Naive thymus-derived CD4-positive, alpha-beta T cell (primary cell): ENCODE measurements at regions of chr10 and their contacts with region 1.

Region 1: GRCh38 chr10:32378363-32379317 is 31.7 kb upstream of the EPC1 start:
- DNase-seq: peak; percentile 69 to 95 (median 91)
- ATAC-seq: peak; percentile 97
- H3K4me3 ChIP-seq: peak overlapping the region; percentile 92
- H3K4me3 Mint-ChIP-seq: no peak overlapping the region
- H3K27ac ChIP-seq: peak overlapping the region; percentile 91
- H3K27ac Mint-ChIP-seq: no peak overlapping the region
- H3K4me1 ChIP-seq: peaks cover 4 to 11% of the 10 kb centered on the region in 2 donors
- H3K4me1 Mint-ChIP-seq: peaks cover 12 to 21% (median 20%) of the 10 kb centered on the region in 7 donors
- H3K27me3 ChIP-seq: no peaks in the 10 kb centered on the region
- H3K27me3 Mint-ChIP-seq: no peaks in the 10 kb centered on the region

Region 2: DNA sequence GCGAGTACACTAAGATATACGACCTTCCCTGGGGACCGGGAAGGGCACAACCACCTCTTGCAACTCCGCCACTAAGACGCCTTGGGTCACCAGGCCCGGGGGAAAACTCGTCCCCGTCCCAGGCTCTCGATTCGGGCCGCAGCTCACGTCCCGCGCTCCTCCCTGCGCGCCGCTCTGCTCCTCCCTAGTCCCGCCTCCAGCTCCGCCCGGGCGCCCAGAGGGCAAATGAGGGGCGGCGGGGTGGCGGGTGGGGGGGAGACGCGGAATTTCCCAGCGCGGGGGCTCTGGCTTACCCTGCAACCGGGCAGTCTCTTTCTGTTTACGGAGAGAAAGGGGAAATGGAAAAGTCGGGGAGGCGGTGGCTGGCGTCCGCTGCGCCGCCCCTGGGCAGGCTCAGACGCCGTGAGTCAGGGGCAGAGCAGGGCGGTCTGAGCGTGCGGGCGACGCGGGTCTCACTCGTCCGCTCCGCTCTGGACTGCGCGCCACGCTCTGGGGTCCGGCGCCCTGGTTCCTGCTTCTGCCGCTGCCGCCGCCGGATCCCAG is 1944.8 kb before region 1 on chr10 and contains the start of gene MAP3K8:
- CTCF ChIA-PET with region 1: no interaction called
- POLR2A ChIA-PET with region 1: no interaction called
- intact Hi-C with region 1: loop called in 1 of 2 experiments (anchors 5 kb)
- DNase-seq: peak; percentile 52 to 92 (median 59)
- ATAC-seq: peak; percentile 86
- H3K4me3 ChIP-seq: peak within 1 kb of the TSS; percentile 69
- H3K4me3 Mint-ChIP-seq: peak within 1 kb of the TSS; percentile 82 to 93 (median 89)
- H3K27ac ChIP-seq: peak within 1 kb of the TSS; percentile 68
- H3K27ac Mint-ChIP-seq: peak within 1 kb of the TSS; percentile 23 to 94 (median 70)
- H3K4me1 ChIP-seq: peaks cover 21 to 22% of the 10 kb centered on the region in 2 donors
- H3K4me1 Mint-ChIP-seq: peaks cover 37 to 62% (median 46%) of the 10 kb centered on the region in 7 donors
- H3K27me3 ChIP-seq: no peaks in the 10 kb centered on the region
- H3K27me3 Mint-ChIP-seq: no peaks in the 10 kb centered on the region
- total RNA-seq, gene MAP3K8: 0.70 to 102 (median 31.2) TPM

Region 3: GRCh38 chr10:31644931-31645633 is 733.6 kb before region 1 on chr10:
- CTCF ChIA-PET with region 1: no interaction called
- POLR2A ChIA-PET with region 1: no interaction called
- intact Hi-C with region 1: no loop called
- DNase-seq: no peak
- ATAC-seq: no peak
- H3K4me3 ChIP-seq: no peak overlapping the region
- H3K4me3 Mint-ChIP-seq: no peak overlapping the region
- H3K27ac ChIP-seq: no peak overlapping the region
- H3K27ac Mint-ChIP-seq: peak overlapping the region in 1 of 9 donors; percentile 60
- H3K4me1 ChIP-seq: no peaks in the 10 kb centered on the region
- H3K4me1 Mint-ChIP-seq: no peaks in the 10 kb centered on the region
- H3K27me3 ChIP-seq: no peaks in the 10 kb centered on the region
- H3K27me3 Mint-ChIP-seq: peaks cover 5 to 16% (median 13%) of the 10 kb centered on the region in 5 donors

Region 4: GRCh38 chr10:31864834-31865518 is 513.7 kb before region 1 on chr10:
- CTCF ChIA-PET with region 1: no interaction called
- POLR2A ChIA-PET with region 1: no interaction called
- intact Hi-C with region 1: loop called in 1 of 2 experiments (anchors 10 kb)
- DNase-seq: no peak
- ATAC-seq: no peak
- H3K4me3 ChIP-seq: no peak overlapping the region
- H3K4me3 Mint-ChIP-seq: peak overlapping the region in 1 of 10 donors; percentile 40
- H3K27ac ChIP-seq: no peak overlapping the region
- H3K27ac Mint-ChIP-seq: peak overlapping the region in 3 of 9 donors; percentile 1 to 3 (median 2)
- H3K4me1 ChIP-seq: peaks cover 0 to 3% of the 10 kb centered on the region in 2 donors
- H3K4me1 Mint-ChIP-seq: peaks cover 8 to 41% (median 34%) of the 10 kb centered on the region in 7 donors
- H3K27me3 ChIP-seq: no peaks in the 10 kb centered on the region
- H3K27me3 Mint-ChIP-seq: no peaks in the 10 kb centered on the region

Region 5: DNA sequence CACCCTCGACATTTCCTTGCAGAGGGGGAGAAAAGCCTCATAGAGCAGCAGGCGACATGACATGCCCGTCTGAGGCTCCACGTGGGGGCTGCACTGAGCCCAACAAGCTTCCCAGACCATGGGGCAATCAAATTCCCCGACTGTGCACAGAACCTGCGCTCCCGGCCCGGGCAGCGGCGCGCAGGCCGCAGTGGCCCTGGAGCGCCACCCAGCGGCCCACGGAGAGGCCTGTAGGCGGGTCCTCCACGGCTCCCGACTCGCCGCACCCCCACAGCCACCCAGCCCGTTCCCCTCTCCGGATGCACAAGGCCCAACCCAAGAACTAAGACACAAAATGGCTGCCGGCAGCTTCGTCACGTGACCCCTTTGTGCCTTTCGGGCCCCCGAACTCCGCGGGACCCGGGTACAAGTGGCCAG is 32.5 kb before region 1 on chr10:
- CTCF ChIA-PET with region 1: interaction called, 5 read pairs
- POLR2A ChIA-PET with region 1: interaction called, 22 read pairs
- intact Hi-C with region 1: loop called (anchors 1 kb)
- DNase-seq: peak in 8 of 9 donors; percentile 93 to 98 (median 97)
- ATAC-seq: peak; percentile 92
- H3K4me3 ChIP-seq: peak overlapping the region; percentile 98
- H3K4me3 Mint-ChIP-seq: peak overlapping the region; percentile 86 to 97 (median 93)
- H3K27ac ChIP-seq: peak overlapping the region; percentile 99
- H3K27ac Mint-ChIP-seq: peak overlapping the region; percentile 99 to 100 (median 100)
- H3K4me1 ChIP-seq: peaks cover 42 to 50% of the 10 kb centered on the region in 2 donors
- H3K4me1 Mint-ChIP-seq: peaks cover 35 to 77% (median 73%) of the 10 kb centered on the region in 7 donors
- H3K27me3 ChIP-seq: no peaks in the 10 kb centered on the region
- H3K27me3 Mint-ChIP-seq: no peaks in the 10 kb centered on the region

Region 6: DNA sequence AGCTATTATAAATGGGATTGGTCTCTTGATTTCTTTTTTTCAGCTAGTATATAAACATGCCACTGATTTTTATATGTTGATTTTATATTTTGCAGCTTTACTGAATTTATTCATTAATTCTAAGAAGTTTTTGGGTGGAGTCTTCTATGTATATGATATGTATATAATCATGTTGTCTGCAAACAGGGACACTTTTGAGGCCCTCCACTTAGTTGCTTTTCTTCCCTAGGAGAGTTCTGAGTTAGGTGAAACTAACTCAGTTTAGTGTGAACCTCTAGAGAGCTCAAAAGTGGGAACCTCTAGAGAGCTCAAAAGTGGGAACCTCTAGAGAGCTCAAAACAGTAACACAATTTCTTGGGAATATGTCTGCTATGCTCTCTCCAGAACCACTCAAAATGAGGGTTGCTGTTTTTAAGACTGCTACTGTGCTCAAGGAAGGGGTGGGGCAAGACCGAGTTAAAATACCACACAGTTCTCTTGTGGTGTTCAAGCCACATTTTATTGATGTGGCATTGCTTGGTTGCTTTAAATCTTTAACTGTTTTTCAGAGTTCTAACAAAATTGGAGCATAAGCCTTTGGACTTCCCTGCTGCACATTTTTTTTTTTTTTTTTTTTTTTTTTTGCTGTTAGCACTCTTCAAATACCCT is 80.5 kb after region 1 on chr10:
- CTCF ChIA-PET with region 1: interaction called, 4 read pairs
- POLR2A ChIA-PET with region 1: interaction called, 26 read pairs
- intact Hi-C with region 1: loop called (anchors 1 kb)
- DNase-seq: peak in 7 of 9 donors; percentile 76 to 90 (median 87)
- ATAC-seq: peak; percentile 100
- H3K4me3 ChIP-seq: peak overlapping the region; percentile 34
- H3K4me3 Mint-ChIP-seq: peak overlapping the region; percentile 48 to 79 (median 68)
- H3K27ac ChIP-seq: peak overlapping the region; percentile 43
- H3K27ac Mint-ChIP-seq: peak overlapping the region; percentile 73 to 92 (median 85)
- H3K4me1 ChIP-seq: peaks cover 31 to 35% of the 10 kb centered on the region in 2 donors
- H3K4me1 Mint-ChIP-seq: peaks cover 20 to 69% (median 61%) of the 10 kb centered on the region in 7 donors
- H3K27me3 ChIP-seq: no peaks in the 10 kb centered on the region
- H3K27me3 Mint-ChIP-seq: no peaks in the 10 kb centered on the region

Region 7: GRCh38 chr10:32516567-32517495 is 138.2 kb after region 1 on chr10:
- CTCF ChIA-PET with region 1: no interaction called
- POLR2A ChIA-PET with region 1: no interaction called
- intact Hi-C with region 1: no loop called
- DNase-seq: no peak
- ATAC-seq: no peak
- H3K4me3 ChIP-seq: no peak overlapping the region
- H3K4me3 Mint-ChIP-seq: no peak overlapping the region
- H3K27ac ChIP-seq: no peak overlapping the region
- H3K27ac Mint-ChIP-seq: peak overlapping the region in 1 of 9 donors; percentile 39
- H3K4me1 ChIP-seq: no peaks in the 10 kb centered on the region
- H3K4me1 Mint-ChIP-seq: peaks cover 0 to under 1% (median 0%) of the 10 kb centered on the region in 7 donors
- H3K27me3 ChIP-seq: no peaks in the 10 kb centered on the region
- H3K27me3 Mint-ChIP-seq: no peaks in the 10 kb centered on the region

Region 8: DNA sequence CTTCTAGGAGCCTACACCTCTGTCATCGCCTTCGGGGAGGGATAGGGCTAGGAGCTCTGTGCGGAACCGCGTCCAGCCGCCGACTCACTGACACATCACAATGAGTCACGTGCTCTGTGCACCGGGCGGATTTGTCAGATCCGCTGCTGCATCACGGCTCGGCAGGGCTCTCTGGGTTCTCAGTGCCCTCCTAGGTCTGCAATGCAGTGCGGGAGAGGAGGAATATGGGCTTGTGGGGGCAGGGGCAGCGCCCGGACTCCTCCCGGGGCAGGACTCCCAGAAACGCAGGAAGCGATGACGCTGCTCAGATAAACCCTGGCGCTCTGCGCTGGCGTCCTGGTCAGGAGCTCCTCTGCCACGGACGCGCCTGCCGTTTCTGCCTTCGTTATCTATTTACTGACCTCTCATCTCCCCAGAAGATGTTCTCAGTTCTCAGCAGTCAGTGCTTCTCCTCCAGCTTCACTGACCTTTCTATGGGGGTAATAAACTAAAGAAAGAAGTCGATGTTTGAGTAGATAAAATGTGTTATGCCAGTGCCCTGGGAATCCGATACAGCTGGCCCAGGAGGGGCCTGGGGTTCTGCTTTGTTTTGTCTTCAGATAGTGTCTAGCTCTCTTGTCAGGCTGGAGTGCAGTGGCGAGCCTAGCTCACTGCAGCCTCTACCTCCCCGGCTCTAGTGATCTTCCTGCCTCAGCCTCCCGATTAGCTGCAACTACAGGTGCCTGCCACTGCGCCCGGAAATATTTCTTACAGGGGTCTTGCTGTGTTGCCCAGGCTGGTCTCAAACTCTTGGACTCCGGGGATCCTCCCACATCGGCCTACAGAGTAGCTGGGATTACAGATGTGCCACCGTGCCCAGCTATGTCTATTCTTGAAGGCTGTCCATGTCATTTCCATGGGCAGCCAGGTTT is 602.2 kb after region 1 on chr10:
- CTCF ChIA-PET with region 1: no interaction called
- POLR2A ChIA-PET with region 1: interaction called, 12 read pairs
- intact Hi-C with region 1: no loop called
- DNase-seq: peak; percentile 54 to 84 (median 66)
- ATAC-seq: peak; percentile 95
- H3K4me3 ChIP-seq: peak overlapping the region; percentile 64
- H3K4me3 Mint-ChIP-seq: peak overlapping the region; percentile 90 to 99 (median 95)
- H3K27ac ChIP-seq: peak overlapping the region; percentile 56
- H3K27ac Mint-ChIP-seq: peak overlapping the region; percentile 82 to 99 (median 93)
- H3K4me1 ChIP-seq: peaks cover 11 to 32% of the 10 kb centered on the region in 2 donors
- H3K4me1 Mint-ChIP-seq: peaks cover 15 to 33% (median 24%) of the 10 kb centered on the region in 7 donors
- H3K27me3 ChIP-seq: no peaks in the 10 kb centered on the region
- H3K27me3 Mint-ChIP-seq: peaks cover 0 to 5% (median 0%) of the 10 kb centered on the region in 5 donors

Region 9: DNA sequence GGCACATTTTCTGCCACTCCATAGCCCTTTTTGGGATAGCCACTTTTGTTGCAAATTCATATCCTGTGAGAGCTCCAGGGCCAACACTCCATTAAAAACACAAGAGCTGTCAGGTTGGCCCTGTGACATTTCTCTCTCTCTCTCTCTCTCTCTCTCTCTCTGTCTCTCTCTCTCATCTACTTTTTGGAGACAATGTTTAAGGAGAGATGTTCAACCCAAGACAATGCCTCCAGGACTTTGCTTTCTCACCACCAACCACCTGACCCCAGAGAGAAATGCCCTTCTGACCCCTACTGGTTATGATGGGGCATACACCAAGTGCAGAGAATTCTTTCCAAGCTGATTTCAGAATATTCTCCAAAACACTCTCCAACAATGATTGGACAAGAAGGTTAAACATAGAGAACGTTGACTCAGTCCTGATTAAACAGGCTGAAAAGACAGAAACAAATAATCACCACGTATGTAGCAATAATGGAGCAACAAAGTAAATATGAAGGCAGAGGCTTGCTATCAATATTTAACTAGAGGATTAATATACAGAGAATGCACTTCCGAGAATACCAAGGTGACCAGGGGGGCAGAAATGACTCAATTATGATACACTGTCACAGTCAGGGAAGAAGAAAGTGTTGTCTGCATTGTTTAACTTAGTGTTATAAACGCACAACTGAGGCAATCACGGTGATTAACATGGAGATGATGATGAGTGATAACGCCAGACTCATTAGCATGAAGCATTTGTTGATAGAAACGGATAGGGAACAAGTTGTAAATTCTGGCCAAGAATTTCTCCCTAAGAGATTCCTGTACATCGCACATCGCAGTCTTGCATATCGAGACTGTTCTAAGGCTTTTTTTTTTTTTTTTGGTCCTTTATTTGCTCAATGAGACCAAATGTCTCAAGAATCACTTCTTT is 777.3 kb after region 1 on chr10:
- CTCF ChIA-PET with region 1: interaction called, 3 read pairs
- POLR2A ChIA-PET with region 1: no interaction called
- intact Hi-C with region 1: loop called in 1 of 2 experiments (anchors 5 kb)
- DNase-seq: peak in 7 of 9 donors; percentile 28 to 65 (median 55)
- ATAC-seq: peak; percentile 85
- H3K4me3 ChIP-seq: no peak overlapping the region
- H3K4me3 Mint-ChIP-seq: no peak overlapping the region
- H3K27ac ChIP-seq: no peak overlapping the region
- H3K27ac Mint-ChIP-seq: peak overlapping the region in 8 of 9 donors; percentile 0 to 88 (median 41)
- H3K4me1 ChIP-seq: peaks cover 15 to 44% of the 10 kb centered on the region in 2 donors
- H3K4me1 Mint-ChIP-seq: peaks cover 8 to 41% (median 35%) of the 10 kb centered on the region in 7 donors
- H3K27me3 ChIP-seq: no peaks in the 10 kb centered on the region
- H3K27me3 Mint-ChIP-seq: no peaks in the 10 kb centered on the region